Calu3 (cell line): ENCODE measurements at regions of chr9 and their contacts with region 1.

Region 1: DNA sequence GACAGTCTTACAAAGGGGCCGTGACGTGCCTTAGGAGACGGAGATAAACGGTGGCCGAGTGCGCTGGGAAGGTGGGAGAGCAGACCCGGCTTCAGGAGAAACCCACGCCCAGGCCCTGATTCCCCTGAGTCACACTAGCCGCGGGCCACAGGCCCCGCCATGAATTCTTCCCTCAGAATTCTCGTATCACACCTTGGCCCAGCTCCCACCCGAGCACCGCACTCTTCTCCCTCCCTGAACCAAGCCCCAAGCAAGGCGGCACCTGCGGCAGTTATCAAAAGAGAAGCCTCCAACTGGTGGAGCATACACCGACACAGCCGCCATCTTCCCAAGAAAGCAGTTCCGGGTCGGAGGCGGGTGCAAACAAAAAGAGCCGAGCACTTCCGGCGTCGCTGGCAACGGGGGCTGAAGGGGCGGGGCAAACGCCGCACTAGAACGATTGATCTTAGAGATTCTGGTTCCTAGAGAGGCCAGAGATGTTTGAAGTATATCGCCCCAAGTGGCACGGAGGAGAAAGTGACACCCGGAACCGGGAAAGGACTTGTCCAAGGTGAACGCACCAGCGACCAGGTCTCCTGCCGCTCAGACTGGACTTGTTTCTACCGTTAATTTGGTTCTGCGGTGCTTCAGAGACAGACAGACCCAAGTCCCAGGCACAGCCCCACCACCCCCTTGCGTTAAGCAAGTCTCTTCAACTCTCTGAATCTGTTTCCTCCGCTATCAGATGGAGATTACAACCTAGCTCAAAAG is at the start of gene PSMB7:
- DNase-seq: peak; percentile 91
- H3K4me3 Mint-ChIP-seq: peak within 1 kb of the TSS; percentile 91
- H3K27ac Mint-ChIP-seq: peak within 1 kb of the TSS; percentile 94
- H3K4me1 Mint-ChIP-seq: peaks cover 10% of the 10 kb centered on the region
- H3K27me3 Mint-ChIP-seq: no peaks in the 10 kb centered on the region
- CTCF ChIP-seq: peak; percentile 56
- total RNA-seq, gene PSMB7: 137 and 148 TPM in 2 replicates

Region 2: DNA sequence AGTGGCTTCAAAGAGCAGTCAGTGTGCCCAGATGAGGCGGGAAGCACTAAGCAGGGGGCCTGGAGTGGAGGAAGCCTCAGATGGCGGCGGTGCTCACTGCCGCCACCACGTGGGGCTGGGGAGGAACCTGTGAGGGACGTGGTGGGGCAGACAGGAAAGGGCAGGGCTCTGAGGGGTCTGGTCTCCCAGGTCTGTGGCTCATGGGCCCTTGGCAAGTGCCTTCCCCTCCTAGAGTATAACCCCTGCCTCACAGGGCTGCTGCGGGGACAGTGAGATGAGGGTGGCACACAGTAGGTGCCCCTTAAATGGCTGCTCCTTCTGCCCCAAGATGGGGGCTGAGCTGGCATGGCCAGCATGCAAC is 65.3 kb after region 1 on chr9:
- CTCF ChIA-PET with region 1: no interaction called
- intact Hi-C with region 1: loop called (anchors 5 kb)
- DNase-seq: peak; percentile 29
- H3K4me3 Mint-ChIP-seq: no peak overlapping the region
- H3K27ac Mint-ChIP-seq: no peak overlapping the region
- H3K4me1 Mint-ChIP-seq: peaks cover 6% of the 10 kb centered on the region
- H3K27me3 Mint-ChIP-seq: peaks cover 49% of the 10 kb centered on the region
- CTCF ChIP-seq: no peak

Region 3: DNA sequence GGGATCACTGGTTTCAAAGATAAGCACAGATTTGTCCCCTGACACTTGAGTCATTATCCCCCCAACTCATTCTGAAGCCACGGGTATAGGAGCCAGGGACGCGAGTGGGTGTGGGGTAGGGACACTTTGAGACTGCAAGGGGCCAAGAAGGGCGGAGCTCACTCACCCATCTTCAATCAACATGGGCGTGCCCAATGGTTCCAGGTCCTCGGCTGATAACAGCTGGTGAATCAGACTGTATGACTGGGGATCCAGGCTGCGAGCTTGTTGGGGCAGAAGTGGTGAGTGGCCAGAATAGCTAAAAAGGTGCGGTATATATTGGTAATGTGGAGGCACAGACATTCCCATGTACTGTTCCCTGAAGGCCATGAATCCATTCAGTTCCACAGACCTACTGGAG is 122.6 kb after region 1 on chr9:
- CTCF ChIA-PET with region 1: interaction called, 4 read pairs
- intact Hi-C with region 1: loop called (anchors 2 kb)
- DNase-seq: no peak
- H3K4me3 Mint-ChIP-seq: no peak overlapping the region
- H3K27ac Mint-ChIP-seq: no peak overlapping the region
- H3K4me1 Mint-ChIP-seq: no peaks in the 10 kb centered on the region
- H3K27me3 Mint-ChIP-seq: no peaks in the 10 kb centered on the region
- CTCF ChIP-seq: no peak

Region 4: GRCh38 chr9:124617471-124618141 is 202.3 kb after region 1 on chr9:
- CTCF ChIA-PET with region 1: no interaction called
- intact Hi-C with region 1: no loop called
- DNase-seq: peak; percentile 79
- H3K4me3 Mint-ChIP-seq: peak overlapping the region; percentile 48
- H3K27ac Mint-ChIP-seq: peak overlapping the region; percentile 72
- H3K4me1 Mint-ChIP-seq: peaks cover 22% of the 10 kb centered on the region
- H3K27me3 Mint-ChIP-seq: no peaks in the 10 kb centered on the region
- CTCF ChIP-seq: peak; percentile 81

Region 5: GRCh38 chr9:124721109-124721906 is 306.0 kb after region 1 on chr9:
- CTCF ChIA-PET with region 1: no interaction called
- intact Hi-C with region 1: loop called (anchors 10 kb)
- DNase-seq: no peak
- H3K4me3 Mint-ChIP-seq: no peak overlapping the region
- H3K27ac Mint-ChIP-seq: no peak overlapping the region
- H3K4me1 Mint-ChIP-seq: no peaks in the 10 kb centered on the region
- H3K27me3 Mint-ChIP-seq: no peaks in the 10 kb centered on the region
- CTCF ChIP-seq: no peak